GM23248 (cell line): ENCODE measurements at regions of chr7 and their contacts with region 1.

Region 1: GRCh38 chr7:14717816-14718215 is 184.7 kb downstream of the DGKB start:
- DNase-seq: peak; percentile 65
- H3K4me3 ChIP-seq: no peak overlapping the region
- H3K27ac ChIP-seq: no peak overlapping the region
- H3K4me1 ChIP-seq: no peaks in the 10 kb centered on the region
- H3K27me3 ChIP-seq: no peaks in the 10 kb centered on the region

Region 2: DNA sequence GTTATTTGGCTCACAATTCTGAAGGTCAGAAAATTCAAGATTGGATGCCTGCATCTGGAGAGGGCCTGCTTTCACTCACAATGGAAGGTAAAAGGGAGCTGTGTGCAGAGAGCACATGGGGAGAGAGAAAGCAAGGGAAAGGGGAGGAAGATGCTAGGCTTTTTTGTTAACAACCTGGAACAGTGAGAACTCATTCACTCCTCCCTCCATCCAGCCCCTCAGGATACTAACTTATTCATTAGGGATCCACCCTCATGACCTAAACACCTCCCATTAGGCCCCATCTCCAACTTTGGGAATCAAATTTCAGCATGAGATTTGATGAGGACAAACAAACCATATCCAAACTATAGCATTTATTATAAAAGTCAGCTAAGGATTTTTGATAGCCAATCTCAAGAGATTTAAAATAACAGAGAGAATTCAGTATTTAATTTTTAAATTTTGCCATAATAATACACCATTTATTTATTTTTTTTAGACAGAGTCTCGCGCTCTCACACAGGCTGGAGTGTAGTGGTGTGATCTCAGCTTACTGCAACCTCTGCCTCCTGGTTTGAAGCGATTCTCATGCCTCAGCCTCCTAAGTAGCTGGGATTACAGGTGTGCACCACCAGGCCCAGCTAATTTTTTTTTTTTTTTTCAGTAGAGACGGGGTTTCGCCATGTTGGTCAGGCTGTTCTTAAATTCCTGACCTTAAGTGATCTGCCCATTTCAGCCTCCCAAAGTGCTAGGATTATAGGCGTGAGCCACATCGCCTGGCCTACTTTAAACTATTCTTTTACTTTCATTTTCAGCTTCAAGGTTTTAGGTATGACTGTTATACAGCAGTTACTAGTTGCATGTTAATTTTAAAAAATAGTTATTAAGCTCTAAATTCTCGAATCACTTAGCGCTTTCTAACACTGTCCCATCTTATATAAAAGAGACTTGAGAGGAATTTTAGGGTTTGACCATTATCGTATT is 708.1 kb before region 1 on chr7:
- in situ Hi-C with region 1: no loop called
- DNase-seq: no peak
- H3K4me3 ChIP-seq: no peak overlapping the region
- H3K27ac ChIP-seq: no peak overlapping the region
- H3K4me1 ChIP-seq: no peaks in the 10 kb centered on the region
- H3K27me3 ChIP-seq: no peaks in the 10 kb centered on the region

Region 3: GRCh38 chr7:14024406-14024805 is 693.4 kb before region 1 on chr7:
- in situ Hi-C with region 1: no loop called
- DNase-seq: no peak
- H3K4me3 ChIP-seq: no peak overlapping the region
- H3K27ac ChIP-seq: no peak overlapping the region
- H3K4me1 ChIP-seq: peaks cover 18% of the 10 kb centered on the region; the same call in 1 of the 2 replicates
- H3K27me3 ChIP-seq: no peaks in the 10 kb centered on the region

Region 4: DNA sequence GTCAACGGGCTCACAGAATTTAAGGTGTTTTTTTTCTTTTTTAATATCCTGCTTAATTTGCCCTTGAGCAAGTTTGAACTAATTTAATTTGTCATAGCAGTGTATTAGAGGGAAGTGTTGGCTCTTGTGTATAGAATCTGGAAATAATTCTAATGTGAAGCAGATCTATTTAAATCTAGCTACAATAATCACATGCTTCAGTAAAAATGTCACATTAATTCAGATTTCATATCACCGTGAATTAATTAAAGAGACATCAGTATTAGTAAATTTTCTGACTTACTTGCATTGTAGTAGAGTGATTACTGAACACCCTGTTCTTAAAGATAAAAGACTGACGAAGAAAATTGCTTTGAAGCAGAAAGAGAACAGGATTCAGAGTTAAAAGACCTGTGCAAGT is 60.0 kb after region 1 on chr7:
- in situ Hi-C with region 1: no loop called
- DNase-seq: no peak
- H3K4me3 ChIP-seq: no peak overlapping the region
- H3K27ac ChIP-seq: no peak overlapping the region
- H3K4me1 ChIP-seq: no peaks in the 10 kb centered on the region
- H3K27me3 ChIP-seq: no peaks in the 10 kb centered on the region

Region 5: DNA sequence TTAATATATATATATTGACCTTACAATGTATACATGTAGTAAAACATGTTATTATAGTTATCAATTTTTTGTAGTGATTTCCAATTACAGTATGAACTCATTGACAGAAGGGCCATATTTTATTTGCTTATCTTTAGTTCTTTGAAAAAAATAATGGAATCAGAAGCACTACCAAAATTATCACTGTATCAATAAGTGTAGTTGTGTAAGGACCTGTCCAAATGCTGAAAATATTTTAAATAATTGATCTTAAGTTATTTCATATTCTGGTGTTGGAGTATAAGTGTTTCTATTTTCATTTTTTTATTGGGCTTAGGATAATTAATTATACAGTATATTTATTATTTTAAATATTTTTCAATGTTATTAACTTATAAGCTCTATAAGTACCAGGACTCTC is 193.3 kb after region 1 on chr7:
- in situ Hi-C with region 1: loop called (anchors 10 kb)
- DNase-seq: no peak
- H3K4me3 ChIP-seq: no peak overlapping the region
- H3K27ac ChIP-seq: no peak overlapping the region
- H3K4me1 ChIP-seq: no peaks in the 10 kb centered on the region
- H3K27me3 ChIP-seq: no peaks in the 10 kb centered on the region

Region 6: DNA sequence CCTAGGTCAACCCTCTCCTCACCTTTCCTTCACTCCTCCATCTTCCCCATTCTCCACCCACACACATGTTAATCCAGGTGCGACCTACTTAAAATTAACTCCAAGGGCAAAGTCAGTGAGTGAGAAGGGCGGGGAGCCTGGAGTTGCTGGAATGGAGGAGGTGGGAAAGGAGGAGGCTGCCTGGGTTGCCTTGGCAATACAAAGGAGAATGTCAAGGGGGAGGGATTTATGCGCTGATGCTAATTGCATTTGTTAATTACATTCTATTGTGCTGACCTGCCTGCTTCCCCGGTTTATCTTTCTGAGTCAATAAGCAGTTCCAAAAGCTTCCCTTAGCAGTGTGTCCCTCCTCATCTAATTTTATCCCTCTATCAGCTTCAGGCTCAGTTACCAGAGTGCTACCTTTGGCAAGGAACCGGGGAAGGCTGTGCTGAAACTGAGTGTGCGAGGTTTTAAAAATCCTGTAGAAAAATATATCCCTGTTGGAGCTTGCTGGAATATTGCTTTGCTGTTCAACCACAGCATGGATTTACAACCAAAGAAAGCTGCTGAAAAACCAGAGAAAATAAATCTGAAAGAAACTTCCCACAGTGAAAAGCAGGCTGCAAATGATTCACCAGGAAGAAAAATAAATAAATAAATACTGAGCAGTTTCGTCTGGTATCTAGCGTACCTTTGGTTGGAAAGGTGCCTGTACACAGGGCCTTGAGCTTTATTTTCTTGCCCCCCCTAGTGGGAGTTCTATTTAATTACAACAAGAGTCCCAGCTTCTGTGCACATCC is 297.9 kb after region 1 on chr7:
- in situ Hi-C with region 1: loop called (anchors 10 kb)
- DNase-seq: peak; percentile 75
- H3K4me3 ChIP-seq: 0 out of 2 replicates have a peak overlapping the region, but pooled peaks have one; percentile 31
- H3K27ac ChIP-seq: no peak overlapping the region
- H3K4me1 ChIP-seq: no peaks in the 10 kb centered on the region
- H3K27me3 ChIP-seq: no peaks in the 10 kb centered on the region

Region 7: DNA sequence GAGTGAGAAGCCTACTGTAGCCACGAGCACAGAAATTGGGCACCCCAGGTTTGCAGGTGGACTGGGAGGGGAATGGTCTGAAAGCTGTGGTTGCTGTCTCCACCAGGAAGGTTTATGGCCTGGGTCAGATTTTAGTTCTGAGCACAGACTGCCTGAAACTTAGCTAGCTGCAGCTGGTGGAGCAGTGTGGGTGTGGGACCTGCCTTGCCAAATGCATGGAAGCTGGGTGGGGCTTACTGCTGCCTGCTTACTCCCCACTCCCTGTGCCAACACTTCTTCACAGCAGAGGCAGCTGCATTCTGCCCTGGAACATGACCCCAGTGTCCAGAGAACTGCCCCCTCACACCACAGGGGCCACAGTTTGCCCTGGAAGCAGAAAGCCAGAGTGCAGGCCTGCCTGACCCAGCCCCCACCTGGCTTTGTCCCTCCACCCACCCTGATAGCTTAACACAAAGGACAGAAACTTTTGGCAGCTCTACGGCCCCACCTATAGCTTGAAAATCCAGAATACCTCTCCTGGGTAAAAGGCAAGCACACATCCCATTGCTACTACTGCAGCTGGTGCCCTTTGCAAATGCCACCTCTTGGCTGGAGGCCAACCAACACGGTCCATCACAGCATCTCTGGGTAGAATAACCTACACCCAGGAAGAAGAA is 562.4 kb after region 1 on chr7:
- in situ Hi-C with region 1: loop called (anchors 25 kb)
- DNase-seq: peak; percentile 4
- H3K4me3 ChIP-seq: no peak overlapping the region
- H3K27ac ChIP-seq: no peak overlapping the region
- H3K4me1 ChIP-seq: no peaks in the 10 kb centered on the region
- H3K27me3 ChIP-seq: no peaks in the 10 kb centered on the region